Panc1 (cell line): ENCODE measurements at regions of chr10 and their contacts with region 1.

Region 1: GRCh38 chr10:73209705-73210104 is 37.4 kb downstream of the DNAJC9 start:
- DNase-seq: no peak
- ATAC-seq: no peak
- H3K4me3 ChIP-seq: no peak overlapping the region
- H3K27ac ChIP-seq: no peak overlapping the region
- H3K4me1 ChIP-seq: no peaks in the 10 kb centered on the region
- H3K27me3 ChIP-seq: no peaks in the 10 kb centered on the region
- CTCF ChIP-seq: no peak

Region 2: DNA sequence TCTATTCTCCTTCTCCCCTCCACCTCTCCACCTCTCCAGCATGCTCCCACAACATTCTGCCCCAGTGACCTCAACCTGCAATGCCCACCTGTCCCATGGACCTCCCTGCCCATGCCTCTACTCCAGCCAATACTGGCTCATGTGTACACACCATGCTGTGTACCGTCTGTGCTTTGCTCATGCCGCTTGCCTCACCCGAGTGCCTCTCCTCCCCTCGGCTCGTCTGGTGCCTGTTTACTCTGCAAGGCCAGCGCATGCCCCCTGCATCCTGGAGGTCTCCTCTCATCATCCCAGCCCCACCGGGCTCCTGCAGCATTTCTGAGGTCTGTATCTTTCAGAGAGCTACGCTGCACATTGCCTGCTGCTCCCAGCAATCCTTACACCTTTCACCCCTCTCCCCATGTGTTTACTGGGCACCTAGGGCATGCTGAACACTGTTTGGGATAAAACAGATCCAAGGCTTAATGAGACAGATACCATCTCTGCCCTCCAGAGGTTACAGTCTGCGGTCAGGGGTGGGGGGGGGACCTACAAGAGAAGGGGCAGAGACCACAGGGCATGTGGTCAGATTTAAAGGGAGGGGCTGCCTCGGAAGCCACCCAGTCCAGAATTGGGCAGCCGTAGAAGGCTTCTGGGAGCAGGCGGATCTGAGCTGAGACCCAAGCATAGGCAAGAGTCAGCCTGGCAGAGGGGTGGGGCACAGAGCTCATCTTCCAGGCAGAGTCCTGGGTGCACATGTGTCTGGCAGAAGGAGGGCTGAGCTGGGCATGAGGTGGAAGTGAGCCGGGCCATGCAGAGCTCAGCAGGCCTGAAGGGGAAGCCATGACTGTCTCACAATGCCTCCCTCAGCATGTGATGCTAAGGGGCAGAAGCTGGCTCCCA is 1329.0 kb before region 1 on chr10:
- CTCF ChIA-PET with region 1: no interaction called
- POLR2A ChIA-PET with region 1: interaction called, 14 read pairs
- in situ Hi-C with region 1: no loop called
- intact Hi-C with region 1: no loop called
- DNase-seq: no peak
- ATAC-seq: peak; percentile 79
- H3K4me3 ChIP-seq: no peak overlapping the region
- H3K27ac ChIP-seq: peak overlapping the region; percentile 89
- H3K4me1 ChIP-seq: peaks cover 61% of the 10 kb centered on the region
- H3K27me3 ChIP-seq: no peaks in the 10 kb centered on the region
- CTCF ChIP-seq: no peak

Region 3: GRCh38 chr10:73003822-73004221 is 205.9 kb before region 1 on chr10:
- CTCF ChIA-PET with region 1: no interaction called
- POLR2A ChIA-PET with region 1: interaction called, 16 read pairs
- in situ Hi-C with region 1: no loop called
- intact Hi-C with region 1: no loop called
- DNase-seq: no peak
- ATAC-seq: no peak
- H3K4me3 ChIP-seq: no peak overlapping the region
- H3K27ac ChIP-seq: no peak overlapping the region
- H3K4me1 ChIP-seq: no peaks in the 10 kb centered on the region
- H3K27me3 ChIP-seq: no peaks in the 10 kb centered on the region
- CTCF ChIP-seq: no peak

Region 4: GRCh38 chr10:73495884-73496674 is 286.4 kb after region 1 on chr10 and contains the start of gene PPP3CB:
- CTCF ChIA-PET with region 1: no interaction called
- POLR2A ChIA-PET with region 1: no interaction called
- in situ Hi-C with region 1: no loop called
- intact Hi-C with region 1: no loop called
- DNase-seq: peak; percentile 81
- ATAC-seq: peak; percentile 90
- H3K4me3 ChIP-seq: peak within 1 kb of the TSS; percentile 82 to 88
- H3K27ac ChIP-seq: peak within 1 kb of the TSS; percentile 96
- H3K4me1 ChIP-seq: peaks cover 22% of the 10 kb centered on the region
- H3K27me3 ChIP-seq: no peaks in the 10 kb centered on the region
- CTCF ChIP-seq: no peak
- total RNA-seq, gene PPP3CB: 34.8 TPM